CD4-positive, alpha-beta memory T cell (primary cell): ENCODE measurements at regions of chr9 and their contacts with region 1.

Region 1: GRCh38 chr9:34637356-34638137 is at the start of gene SIGMAR1:
- DNase-seq: peak; percentile 91 to 97 (median 94)
- H3K4me3 ChIP-seq: peak within 1 kb of the TSS; percentile 74 to 84
- H3K4me3 Mint-ChIP-seq: peak within 1 kb of the TSS; percentile 87 to 92 (median 91)
- H3K27ac ChIP-seq: peak within 1 kb of the TSS; percentile 78
- H3K27ac Mint-ChIP-seq: peak within 1 kb of the TSS; percentile 93 to 97 (median 95)
- H3K4me1 ChIP-seq: peaks cover 38% of the 10 kb centered on the region
- H3K4me1 Mint-ChIP-seq: peaks cover 22 to 51% (median 34%) of the 10 kb centered on the region in 4 donors
- H3K27me3 ChIP-seq: no peaks in the 10 kb centered on the region
- H3K27me3 Mint-ChIP-seq: no peaks in the 10 kb centered on the region
- total RNA-seq, gene SIGMAR1: 56.1 to 59.5 TPM

Region 2: DNA sequence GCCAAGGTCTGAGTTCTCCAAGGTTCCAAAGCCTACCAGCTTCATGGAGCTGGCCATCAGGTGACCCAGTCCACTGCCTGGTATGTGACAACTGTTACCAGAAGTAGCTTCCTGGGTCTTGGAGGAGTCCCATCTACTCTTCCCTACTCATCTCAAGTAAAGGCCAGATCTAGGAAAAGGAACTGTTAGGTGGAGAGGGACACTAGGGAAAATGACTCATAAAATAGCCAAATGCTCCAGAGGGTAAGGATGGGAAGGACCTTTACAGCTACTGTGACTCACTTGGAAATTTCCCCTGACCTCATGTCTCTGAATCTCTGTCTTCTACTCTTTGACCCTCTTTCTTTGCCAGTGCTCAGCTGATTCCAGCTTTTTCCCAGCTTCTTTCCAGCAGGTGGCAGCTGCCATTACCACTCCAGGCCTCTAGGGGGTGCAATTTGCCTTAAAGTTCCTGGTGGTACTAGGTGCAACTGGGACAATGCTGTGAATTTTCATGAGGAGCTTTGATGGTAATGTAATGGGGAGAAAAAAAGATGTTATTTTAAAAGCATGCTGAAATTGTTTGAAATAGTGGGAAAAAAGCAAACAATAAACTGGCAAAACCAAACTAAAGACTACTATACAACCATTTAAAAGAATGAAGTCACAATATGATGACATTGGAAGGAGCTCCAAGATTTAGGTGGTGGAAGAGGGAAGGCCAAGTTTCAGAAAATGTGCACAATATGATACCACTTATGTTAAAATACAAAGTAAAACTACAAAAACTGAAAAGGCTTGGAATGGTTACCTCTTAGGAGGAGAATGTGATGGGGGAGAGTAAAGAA is 233.8 kb before region 1 on chr9:
- CTCF ChIA-PET with region 1: interaction called, 10 read pairs
- POLR2A ChIA-PET with region 1: no interaction called
- intact Hi-C with region 1: no loop called
- DNase-seq: peak; percentile 34 to 53 (median 43)
- H3K4me3 ChIP-seq: no peak overlapping the region
- H3K4me3 Mint-ChIP-seq: no peak overlapping the region
- H3K27ac ChIP-seq: no peak overlapping the region
- H3K27ac Mint-ChIP-seq: peak overlapping the region in 1 of 7 donors; percentile 52
- H3K4me1 ChIP-seq: no peaks in the 10 kb centered on the region
- H3K4me1 Mint-ChIP-seq: no peaks in the 10 kb centered on the region
- H3K27me3 ChIP-seq: no peaks in the 10 kb centered on the region
- H3K27me3 Mint-ChIP-seq: no peaks in the 10 kb centered on the region

Region 3: GRCh38 chr9:34500623-34501267 is 136.8 kb before region 1 on chr9:
- CTCF ChIA-PET with region 1: interaction called, 3 read pairs
- POLR2A ChIA-PET with region 1: no interaction called
- intact Hi-C with region 1: loop called (anchors 1 kb)
- DNase-seq: peak; percentile 54 to 69 (median 62)
- H3K4me3 ChIP-seq: no peak overlapping the region
- H3K4me3 Mint-ChIP-seq: no peak overlapping the region
- H3K27ac ChIP-seq: no peak overlapping the region
- H3K27ac Mint-ChIP-seq: no peak overlapping the region
- H3K4me1 ChIP-seq: no peaks in the 10 kb centered on the region
- H3K4me1 Mint-ChIP-seq: peaks cover 0 to 3% (median 1%) of the 10 kb centered on the region in 4 donors
- H3K27me3 ChIP-seq: no peaks in the 10 kb centered on the region
- H3K27me3 Mint-ChIP-seq: peaks cover 3 to 10% of the 10 kb centered on the region in 2 donors

Region 4: DNA sequence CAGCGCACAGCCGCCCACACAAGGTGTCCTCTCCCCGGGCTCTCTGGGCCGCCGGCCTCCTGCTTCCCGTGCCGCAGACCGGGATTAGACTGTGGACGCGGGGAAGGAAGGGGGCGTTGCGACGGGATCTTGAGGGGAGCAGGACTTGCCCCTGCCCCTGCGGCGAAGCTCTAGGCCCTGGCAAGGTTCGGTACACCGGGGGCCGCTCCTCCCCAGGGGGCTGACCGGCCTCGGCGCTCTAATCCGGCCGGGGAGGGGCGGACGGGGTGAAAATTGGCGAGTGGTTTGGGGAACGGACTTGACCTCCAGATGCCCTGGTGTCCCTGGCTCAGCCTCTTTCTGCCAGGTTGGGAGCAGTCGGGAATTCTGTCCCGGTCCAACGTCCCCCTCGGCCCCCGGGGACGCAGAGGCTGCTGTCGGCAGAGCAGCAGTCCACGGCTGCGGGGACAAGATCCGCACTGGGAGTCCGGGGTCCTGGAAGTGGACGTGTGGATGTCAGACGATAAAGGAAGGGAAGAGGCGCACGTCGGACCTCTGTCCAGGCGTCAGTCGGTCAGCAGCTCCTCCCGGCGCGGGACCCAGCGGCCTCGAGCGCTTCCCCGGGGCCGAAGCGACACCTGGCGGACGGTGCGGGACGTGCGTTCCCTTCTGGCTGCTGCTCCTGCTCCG is 46.2 kb before region 1 on chr9:
- CTCF ChIA-PET with region 1: interaction called, 14 read pairs
- POLR2A ChIA-PET with region 1: no interaction called
- intact Hi-C with region 1: no loop called
- DNase-seq: peak; percentile 61 to 74 (median 65)
- H3K4me3 ChIP-seq: peak overlapping the region; percentile 23 to 50
- H3K4me3 Mint-ChIP-seq: peak overlapping the region; percentile 25 to 85 (median 80)
- H3K27ac ChIP-seq: no peak overlapping the region
- H3K27ac Mint-ChIP-seq: no peak overlapping the region
- H3K4me1 ChIP-seq: peaks cover 25% of the 10 kb centered on the region
- H3K4me1 Mint-ChIP-seq: peaks cover 12 to 45% (median 20%) of the 10 kb centered on the region in 4 donors
- H3K27me3 ChIP-seq: peaks cover 47% of the 10 kb centered on the region
- H3K27me3 Mint-ChIP-seq: peaks cover 52 to 67% of the 10 kb centered on the region in 2 donors

Region 5: DNA sequence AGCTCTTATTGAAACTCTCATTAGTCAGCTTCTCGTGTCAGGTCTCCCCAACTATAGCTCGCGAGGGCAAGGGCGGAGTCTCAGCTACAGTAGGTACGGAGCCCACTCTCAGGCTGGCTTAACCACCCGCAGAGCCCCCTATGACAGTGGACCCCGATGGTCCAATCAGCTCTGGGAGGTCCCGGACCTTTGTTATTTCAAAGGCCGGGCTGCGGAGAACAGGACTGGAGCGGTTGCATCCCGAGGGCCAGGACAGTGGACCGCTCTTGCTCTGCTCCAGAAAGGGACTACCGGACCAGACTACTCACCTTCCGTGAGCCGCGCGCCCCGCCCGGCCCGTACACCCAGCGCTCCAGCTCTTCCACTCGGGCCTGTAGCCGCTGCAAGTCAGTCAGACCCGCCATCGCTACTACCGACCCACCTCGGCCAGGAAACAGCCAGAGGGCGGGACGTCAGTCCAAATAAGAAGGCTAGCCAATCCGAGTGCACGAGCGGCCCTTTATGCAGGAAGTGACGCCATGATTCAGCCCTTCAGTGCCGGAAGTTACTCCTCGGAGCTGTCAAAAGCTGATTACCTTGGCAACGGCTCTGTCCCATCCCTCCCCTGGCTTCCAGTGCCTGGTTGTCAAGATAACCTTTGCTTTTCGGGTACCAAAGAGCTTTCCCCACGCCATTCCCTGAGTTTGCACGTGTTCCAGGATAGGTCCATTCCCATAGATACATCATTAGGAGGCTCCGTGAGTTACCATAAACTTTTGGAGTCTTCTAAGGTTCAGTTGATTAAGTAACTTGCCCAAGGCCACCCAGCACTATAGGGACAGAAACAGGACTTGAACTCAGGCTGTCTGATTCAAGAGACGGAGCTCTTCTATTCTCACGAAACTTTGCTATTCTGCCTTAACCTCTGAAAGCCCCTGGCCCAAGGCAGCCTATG is 17.2 kb before region 1 on chr9 and contains the start of gene DCTN3:
- CTCF ChIA-PET with region 1: interaction called, 235 read pairs
- POLR2A ChIA-PET with region 1: interaction called, 47 read pairs
- intact Hi-C with region 1: no loop called
- DNase-seq: peak; percentile 89 to 97 (median 93)
- H3K4me3 ChIP-seq: peak within 1 kb of the TSS; percentile 71 to 90
- H3K4me3 Mint-ChIP-seq: peak within 1 kb of the TSS; percentile 93 to 98 (median 96)
- H3K27ac ChIP-seq: peak within 1 kb of the TSS; percentile 69
- H3K27ac Mint-ChIP-seq: peak within 1 kb of the TSS; percentile 82 to 98 (median 95)
- H3K4me1 ChIP-seq: peaks cover 27% of the 10 kb centered on the region
- H3K4me1 Mint-ChIP-seq: peaks cover 17 to 41% (median 29%) of the 10 kb centered on the region in 4 donors
- H3K27me3 ChIP-seq: peaks cover 29% of the 10 kb centered on the region
- H3K27me3 Mint-ChIP-seq: peaks cover 19 to 26% of the 10 kb centered on the region in 2 donors
- total RNA-seq, gene DCTN3: 57.8 to 62.0 TPM